Right ventricle myocardium inferior (tissue), 1 donor: ENCODE measurements at regions of chr1 and their contacts with region 1.

Region 1: GRCh38 chr1:227482023-227482299 is 81.4 kb upstream of the ZNF678 start:
- DNase-seq: no peak
- ATAC-seq: no peak

Region 2: GRCh38 chr1:227946624-227947385 is 464.8 kb after region 1 on chr1:
- intact Hi-C with region 1: loop called (anchors 1 kb)
- DNase-seq: peak; percentile 83
- ATAC-seq: peak; percentile 84